ENCODE measurements at regions of chr20 and their contacts with region 1.

Region 1: GRCh38 chr20:38962044-38962927 is at the start of gene DHX35:
- DNase-seq: peak; percentile 95
- H3K4me3 Mint-ChIP-seq: peak within 1 kb of the TSS; percentile 93
- H3K27ac Mint-ChIP-seq: peak within 1 kb of the TSS; percentile 93
- H3K4me1 Mint-ChIP-seq: peaks cover 19% of the 10 kb centered on the region
- H3K27me3 Mint-ChIP-seq: no peaks in the 10 kb centered on the region
- CTCF ChIP-seq: no peak
- total RNA-seq, gene DHX35: 7.8 and 8.3 TPM in 2 replicates

Region 2: DNA sequence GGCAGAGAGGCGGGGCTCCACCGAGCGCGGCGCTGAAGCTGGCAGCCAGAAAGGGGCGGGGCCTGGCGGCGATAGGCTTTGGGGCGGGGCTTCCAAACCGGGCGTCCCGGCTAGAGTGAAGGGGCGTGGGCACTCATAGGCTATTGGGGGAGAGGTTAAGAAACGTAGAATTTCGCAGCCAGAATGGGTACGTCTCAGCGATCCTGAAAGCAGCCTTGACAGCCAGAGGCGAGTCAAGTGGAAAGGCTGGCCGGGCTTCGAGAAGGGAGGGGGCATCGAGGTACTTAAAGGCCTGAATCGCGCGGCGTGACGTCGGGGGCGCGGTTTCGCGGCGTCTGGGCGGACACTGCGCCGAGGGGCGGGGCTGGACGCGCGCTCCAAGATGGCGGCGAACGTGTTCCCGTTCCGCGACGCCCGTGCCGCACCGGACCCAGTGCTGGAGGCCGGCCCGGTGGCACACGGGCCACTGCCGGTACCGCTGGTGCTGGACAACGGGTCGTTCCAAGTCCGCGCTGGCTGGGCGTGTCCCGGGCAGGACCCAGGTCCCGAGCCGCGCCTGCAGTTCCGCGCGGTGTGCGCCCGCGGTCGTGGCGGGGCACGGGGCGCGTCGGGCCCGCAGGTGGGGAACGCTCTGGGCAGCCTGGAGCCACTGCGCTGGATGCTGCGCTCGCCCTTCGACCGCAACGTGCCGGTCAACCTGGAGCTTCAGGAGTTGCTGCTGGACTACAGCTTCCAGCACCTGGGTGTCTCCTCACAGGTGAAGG is 214.0 kb before region 1 on chr20 and contains the start of gene ACTR5:
- CTCF ChIA-PET with region 1: interaction called, 13 read pairs
- POLR2A ChIA-PET with region 1: interaction called, 26 read pairs
- intact Hi-C with region 1: no loop called
- DNase-seq: peak; percentile 83
- H3K4me3 Mint-ChIP-seq: peak within 1 kb of the TSS; percentile 93
- H3K27ac Mint-ChIP-seq: peak within 1 kb of the TSS; percentile 95
- H3K4me1 Mint-ChIP-seq: peaks cover 18% of the 10 kb centered on the region
- H3K27me3 Mint-ChIP-seq: no peaks in the 10 kb centered on the region
- CTCF ChIP-seq: no peak
- total RNA-seq, gene ACTR5: 6.0 and 6.9 TPM in 2 replicates

Region 3: GRCh38 chr20:38935285-38935684 is 27.0 kb before region 1 on chr20:
- CTCF ChIA-PET with region 1: interaction called, 68 read pairs
- POLR2A ChIA-PET with region 1: interaction called, 88 read pairs
- intact Hi-C with region 1: no loop called
- DNase-seq: peak; percentile 62
- H3K4me3 Mint-ChIP-seq: no peak overlapping the region
- H3K27ac Mint-ChIP-seq: peak overlapping the region; percentile 74
- H3K4me1 Mint-ChIP-seq: peaks cover 29% of the 10 kb centered on the region
- H3K27me3 Mint-ChIP-seq: no peaks in the 10 kb centered on the region
- CTCF ChIP-seq: peak; percentile 31

Region 4: DNA sequence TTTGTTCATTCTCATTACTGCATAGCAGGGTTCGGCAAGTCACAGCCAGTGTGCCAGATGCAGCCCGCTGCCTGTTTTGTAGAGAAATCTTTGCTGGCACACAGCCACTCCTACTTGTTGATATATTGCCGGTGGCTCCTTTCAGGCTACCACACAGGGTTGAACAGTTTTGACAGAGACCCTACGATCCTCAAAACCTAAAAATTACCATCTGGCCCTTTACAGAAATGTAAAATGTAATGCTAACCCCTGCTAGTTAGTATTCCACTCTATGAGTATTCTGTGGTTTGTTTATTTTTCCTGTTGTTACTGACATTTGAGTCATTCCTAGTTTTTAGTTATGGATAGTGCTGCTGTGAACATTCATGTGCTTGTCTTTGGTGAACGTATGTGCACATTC is 11.4 kb after region 1 on chr20:
- CTCF ChIA-PET with region 1: interaction called, 13 read pairs
- POLR2A ChIA-PET with region 1: interaction called, 21 read pairs
- intact Hi-C with region 1: no loop called
- DNase-seq: peak; percentile 8
- H3K4me3 Mint-ChIP-seq: no peak overlapping the region
- H3K27ac Mint-ChIP-seq: peak overlapping the region; percentile 19
- H3K4me1 Mint-ChIP-seq: peaks cover 12% of the 10 kb centered on the region
- H3K27me3 Mint-ChIP-seq: no peaks in the 10 kb centered on the region
- CTCF ChIP-seq: no peak

Region 5: GRCh38 chr20:38985603-38986170 is 23.4 kb after region 1 on chr20:
- CTCF ChIA-PET with region 1: interaction called, 6 read pairs
- POLR2A ChIA-PET with region 1: interaction called, 17 read pairs
- intact Hi-C with region 1: no loop called
- DNase-seq: peak; percentile 6
- H3K4me3 Mint-ChIP-seq: no peak overlapping the region
- H3K27ac Mint-ChIP-seq: peak overlapping the region; percentile 59
- H3K4me1 Mint-ChIP-seq: peaks cover 15% of the 10 kb centered on the region
- H3K27me3 Mint-ChIP-seq: no peaks in the 10 kb centered on the region
- CTCF ChIP-seq: no peak

Region 6: GRCh38 chr20:39004508-39004907 is 42.2 kb after region 1 on chr20:
- CTCF ChIA-PET with region 1: interaction called, 4 read pairs
- POLR2A ChIA-PET with region 1: interaction called, 10 read pairs
- intact Hi-C with region 1: no loop called
- DNase-seq: peak; percentile 50
- H3K4me3 Mint-ChIP-seq: no peak overlapping the region
- H3K27ac Mint-ChIP-seq: no peak overlapping the region
- H3K4me1 Mint-ChIP-seq: no peaks in the 10 kb centered on the region
- H3K27me3 Mint-ChIP-seq: no peaks in the 10 kb centered on the region
- CTCF ChIP-seq: no peak